Activated CD8-positive, alpha-beta T cell treated with anti-CD3 and anti-CD28 coated beads for 36 hours (primary cell): ENCODE measurements at regions of chr12 and their contacts with region 1.

Region 1: DNA sequence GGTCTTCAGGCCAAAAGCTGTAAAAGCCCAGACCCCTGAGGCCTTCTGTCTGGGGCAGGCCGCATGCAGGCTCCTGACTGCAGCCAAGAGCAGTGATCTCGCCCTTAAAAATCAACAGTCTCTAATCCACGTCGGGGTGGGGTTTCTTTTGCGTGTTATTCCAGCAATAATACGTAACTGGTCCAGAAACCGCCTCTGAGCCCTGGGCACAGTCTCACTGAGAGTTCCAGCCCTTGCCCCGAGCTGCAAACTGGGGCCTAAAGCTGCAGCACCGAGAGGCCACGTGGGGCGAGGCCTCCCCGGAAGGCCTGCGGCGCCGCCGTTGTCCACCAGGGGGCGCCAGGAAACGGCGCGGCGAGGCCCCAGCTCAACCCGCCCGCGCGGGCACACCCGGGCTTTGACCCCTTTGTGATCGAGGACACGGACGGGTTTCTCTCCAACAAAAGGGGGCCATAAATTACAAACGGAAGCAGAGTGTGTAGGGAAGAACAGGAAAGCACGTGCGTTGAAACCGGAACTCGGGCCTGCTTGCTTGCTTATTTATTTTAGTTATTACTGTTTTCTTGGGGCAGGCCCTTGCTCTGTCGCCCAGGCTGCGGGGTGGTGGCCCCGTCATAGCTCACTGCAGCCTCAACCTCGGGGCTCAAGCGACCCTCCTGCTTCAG is 87.2 kb downstream of the NINJ2 start:
- DNase-seq: peak; percentile 86
- ATAC-seq: peak; percentile 90
- H3K4me3 Mint-ChIP-seq: no peak overlapping the region
- H3K27ac Mint-ChIP-seq: peak overlapping the region; percentile 79
- H3K4me1 Mint-ChIP-seq: peaks cover 38% of the 10 kb centered on the region
- H3K27me3 Mint-ChIP-seq: no peaks in the 10 kb centered on the region
- CTCF ChIP-seq: peak; percentile 98

Region 2: DNA sequence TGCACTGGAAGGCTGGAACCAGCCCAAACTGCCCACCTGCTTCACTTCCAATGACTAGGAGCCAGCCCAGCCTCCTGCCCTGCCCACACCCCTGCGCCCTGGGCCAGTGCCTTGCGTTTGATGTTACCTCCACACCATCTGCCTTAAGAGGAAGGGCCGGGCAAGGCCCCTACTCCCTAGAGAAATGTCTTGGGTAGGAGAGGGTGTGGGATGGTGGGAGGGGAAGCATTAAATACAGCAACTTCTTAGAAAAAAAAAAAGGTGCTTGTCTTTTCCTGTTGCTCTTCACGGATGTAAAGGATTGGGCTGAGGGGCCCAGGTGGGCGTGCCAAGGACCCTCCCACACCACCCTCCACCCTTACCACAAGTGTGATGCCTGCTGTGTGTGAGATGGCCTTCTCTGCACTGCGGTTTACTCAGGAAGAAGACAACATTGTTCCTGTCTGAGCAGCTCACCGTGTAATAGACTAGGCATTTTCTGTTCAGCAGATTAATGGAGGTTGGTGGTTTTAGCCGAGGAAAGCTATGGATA is 12.8 kb before region 1 on chr12:
- CTCF ChIA-PET with region 1: interaction called, 14 read pairs
- POLR2A ChIA-PET with region 1: interaction called, 4 read pairs
- intact Hi-C with region 1: no loop called
- DNase-seq: peak; percentile 81
- ATAC-seq: peak; percentile 81
- H3K4me3 Mint-ChIP-seq: peak overlapping the region; percentile 57
- H3K27ac Mint-ChIP-seq: peak overlapping the region; percentile 88
- H3K4me1 Mint-ChIP-seq: peaks cover 62% of the 10 kb centered on the region
- H3K27me3 Mint-ChIP-seq: no peaks in the 10 kb centered on the region
- CTCF ChIP-seq: no peak

Region 3: DNA sequence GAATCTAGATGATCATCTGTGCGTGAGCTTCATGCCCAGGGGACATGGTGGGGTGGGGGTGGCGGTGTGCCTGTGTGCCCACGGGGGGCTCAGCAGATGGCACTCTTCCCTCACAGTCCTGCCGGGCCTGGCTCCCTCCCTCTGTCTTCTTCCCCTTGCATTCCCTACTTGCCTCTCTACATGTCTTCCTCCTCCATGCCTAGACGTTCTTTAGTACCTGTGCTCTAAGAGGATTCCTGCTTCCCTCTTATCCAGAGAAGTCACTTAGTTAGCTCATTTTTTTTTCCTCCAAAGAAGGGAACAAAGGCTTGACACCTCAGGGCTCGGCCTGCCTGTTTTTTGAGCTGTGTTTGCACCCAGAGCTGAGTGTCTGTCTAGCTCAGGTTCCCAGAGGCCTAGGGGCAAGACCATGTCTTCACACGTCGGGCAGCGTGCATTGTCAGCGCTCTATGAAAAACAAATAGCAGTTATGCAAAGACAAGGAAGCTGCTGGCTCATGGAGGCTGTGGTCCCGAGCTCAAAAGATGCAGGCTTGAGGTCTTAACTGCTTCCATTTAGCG is 38.4 kb after region 1 on chr12:
- CTCF ChIA-PET with region 1: interaction called, 15 read pairs
- POLR2A ChIA-PET with region 1: interaction called, 4 read pairs
- intact Hi-C with region 1: no loop called
- DNase-seq: peak; percentile 66
- ATAC-seq: peak; percentile 55
- H3K4me3 Mint-ChIP-seq: no peak overlapping the region
- H3K27ac Mint-ChIP-seq: no peak overlapping the region
- H3K4me1 Mint-ChIP-seq: peaks cover 35% of the 10 kb centered on the region
- H3K27me3 Mint-ChIP-seq: no peaks in the 10 kb centered on the region
- CTCF ChIP-seq: peak; percentile 47

Region 4: GRCh38 chr12:642633-643474 is 66.8 kb after region 1 on chr12:
- CTCF ChIA-PET with region 1: interaction called, 15 read pairs
- POLR2A ChIA-PET with region 1: no interaction called
- intact Hi-C with region 1: no loop called
- DNase-seq: peak; percentile 82
- ATAC-seq: peak; percentile 68
- H3K4me3 Mint-ChIP-seq: peak overlapping the region; percentile 84
- H3K27ac Mint-ChIP-seq: peak overlapping the region; percentile 91
- H3K4me1 Mint-ChIP-seq: peaks cover 57% of the 10 kb centered on the region
- H3K27me3 Mint-ChIP-seq: no peaks in the 10 kb centered on the region
- CTCF ChIP-seq: peak; percentile 48

Region 5: DNA sequence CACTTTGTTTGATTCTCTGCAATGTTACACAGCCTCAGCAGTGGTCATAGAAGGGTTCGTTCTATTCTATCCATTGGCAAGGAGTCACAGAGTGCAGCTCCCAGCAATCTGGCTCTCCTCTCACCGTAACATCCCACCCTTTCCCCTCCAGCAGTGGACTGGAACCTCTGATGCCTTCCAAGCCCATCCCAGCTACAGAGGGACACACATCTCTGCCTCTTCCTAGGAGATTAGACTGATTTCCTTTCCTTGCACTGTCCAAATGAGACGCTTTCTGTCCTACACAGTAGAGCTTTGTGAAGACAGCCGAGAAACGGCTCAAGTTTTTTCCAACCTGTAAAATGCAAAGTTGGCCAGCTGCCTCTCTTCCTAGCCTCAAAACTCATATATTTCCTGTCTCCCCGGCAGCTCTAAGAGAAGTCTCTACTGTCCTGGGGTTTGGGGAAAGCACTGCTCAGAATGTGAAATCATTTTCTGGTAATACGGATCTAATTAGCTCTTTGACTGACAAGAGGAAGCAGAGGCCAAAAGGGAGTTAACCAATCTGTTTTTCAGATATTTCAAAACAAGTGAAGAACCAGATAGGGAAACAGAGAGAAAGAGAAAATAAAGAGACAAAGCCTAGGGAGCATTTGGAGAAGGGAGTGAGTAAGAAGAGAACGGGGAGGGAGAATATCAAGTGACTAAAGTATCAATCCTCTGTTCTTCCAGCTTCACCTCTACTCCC is 86.6 kb after region 1 on chr12:
- CTCF ChIA-PET with region 1: interaction called, 23 read pairs
- POLR2A ChIA-PET with region 1: no interaction called
- intact Hi-C with region 1: loop called (anchors 5 kb)
- DNase-seq: no peak
- ATAC-seq: no peak
- H3K4me3 Mint-ChIP-seq: peak overlapping the region; percentile 59
- H3K27ac Mint-ChIP-seq: peak overlapping the region; percentile 79
- H3K4me1 Mint-ChIP-seq: peaks cover 50% of the 10 kb centered on the region
- H3K27me3 Mint-ChIP-seq: no peaks in the 10 kb centered on the region
- CTCF ChIP-seq: no peak

Region 6: DNA sequence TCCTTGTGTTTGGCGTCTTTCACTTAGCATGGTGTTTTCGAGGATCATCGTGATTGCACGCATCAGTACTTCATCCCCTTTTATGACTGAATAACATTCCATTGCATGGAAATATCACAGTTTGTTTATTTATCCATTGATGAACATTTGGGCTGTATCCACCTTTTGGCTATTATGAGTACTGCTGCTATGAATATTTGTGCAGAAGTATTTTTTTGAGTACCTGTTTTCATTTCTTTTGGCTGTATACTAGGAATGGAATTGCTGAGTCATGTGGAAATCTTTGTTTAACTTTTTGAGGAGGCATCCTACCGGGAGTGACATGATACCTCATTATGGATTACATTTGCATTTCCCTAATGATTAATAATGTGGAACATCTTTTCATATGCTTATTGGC is 242.7 kb after region 1 on chr12:
- CTCF ChIA-PET with region 1: interaction called, 69 read pairs
- POLR2A ChIA-PET with region 1: no interaction called
- intact Hi-C with region 1: loop called (anchors 2 kb)
- DNase-seq: no peak
- ATAC-seq: no peak
- H3K4me3 Mint-ChIP-seq: no peak overlapping the region
- H3K27ac Mint-ChIP-seq: no peak overlapping the region
- H3K4me1 Mint-ChIP-seq: peaks cover 53% of the 10 kb centered on the region
- H3K27me3 Mint-ChIP-seq: no peaks in the 10 kb centered on the region
- CTCF ChIP-seq: no peak

Region 7: GRCh38 chr12:1093166-1093751 is 517.2 kb after region 1 on chr12:
- CTCF ChIA-PET with region 1: interaction called, 12 read pairs
- POLR2A ChIA-PET with region 1: no interaction called
- intact Hi-C with region 1: no loop called
- DNase-seq: peak; percentile 51
- ATAC-seq: peak; percentile 93
- H3K4me3 Mint-ChIP-seq: no peak overlapping the region
- H3K27ac Mint-ChIP-seq: no peak overlapping the region
- H3K4me1 Mint-ChIP-seq: peaks cover 19% of the 10 kb centered on the region
- H3K27me3 Mint-ChIP-seq: no peaks in the 10 kb centered on the region
- CTCF ChIP-seq: peak; percentile 87